Caco-2 (cell line): ENCODE measurements at regions of chr16 and their contacts with region 1.

Region 1: GRCh38 chr16:31333686-31334649 is 21.0 kb upstream of the ITGAX start:
- DNase-seq: peak; percentile 51 to 52
- H3K4me3 ChIP-seq: no peak overlapping the region
- H3K4me3 Mint-ChIP-seq: no peak overlapping the region
- H3K27ac Mint-ChIP-seq: no peak overlapping the region
- H3K4me1 ChIP-seq: no peaks in the 10 kb centered on the region
- H3K4me1 Mint-ChIP-seq: peaks cover 14% of the 10 kb centered on the region
- H3K27me3 ChIP-seq: no peaks in the 10 kb centered on the region
- H3K27me3 Mint-ChIP-seq: peaks cover 12% of the 10 kb centered on the region
- CTCF ChIP-seq: peak in 1 of 2 experiments; percentile 65

Region 2: GRCh38 chr16:31215287-31216162 is 118.4 kb before region 1 on chr16:
- CTCF ChIA-PET with region 1: interaction called, 5 read pairs
- POLR2A ChIA-PET with region 1: no interaction called
- intact Hi-C with region 1: loop called (anchors 5 kb)
- DNase-seq: peak; percentile 76 to 77
- H3K4me3 ChIP-seq: peak overlapping the region; percentile 43
- H3K4me3 Mint-ChIP-seq: peak overlapping the region; percentile 70
- H3K27ac Mint-ChIP-seq: no peak overlapping the region
- H3K4me1 ChIP-seq: no peaks in the 10 kb centered on the region
- H3K4me1 Mint-ChIP-seq: peaks cover 11% of the 10 kb centered on the region
- H3K27me3 ChIP-seq: no peaks in the 10 kb centered on the region
- H3K27me3 Mint-ChIP-seq: peaks cover 3% of the 10 kb centered on the region
- CTCF ChIP-seq: no peak

Region 3: GRCh38 chr16:31229501-31229900 is 104.5 kb before region 1 on chr16:
- CTCF ChIA-PET with region 1: no interaction called
- POLR2A ChIA-PET with region 1: no interaction called
- intact Hi-C with region 1: no loop called
- DNase-seq: no peak
- H3K4me3 ChIP-seq: no peak overlapping the region
- H3K4me3 Mint-ChIP-seq: no peak overlapping the region
- H3K27ac Mint-ChIP-seq: no peak overlapping the region
- H3K4me1 ChIP-seq: peaks cover 3% of the 10 kb centered on the region; the same call in 1 of the 2 replicates
- H3K4me1 Mint-ChIP-seq: peaks cover 6% of the 10 kb centered on the region
- H3K27me3 ChIP-seq: no peaks in the 10 kb centered on the region
- H3K27me3 Mint-ChIP-seq: no peaks in the 10 kb centered on the region
- CTCF ChIP-seq: no peak

Region 4: DNA sequence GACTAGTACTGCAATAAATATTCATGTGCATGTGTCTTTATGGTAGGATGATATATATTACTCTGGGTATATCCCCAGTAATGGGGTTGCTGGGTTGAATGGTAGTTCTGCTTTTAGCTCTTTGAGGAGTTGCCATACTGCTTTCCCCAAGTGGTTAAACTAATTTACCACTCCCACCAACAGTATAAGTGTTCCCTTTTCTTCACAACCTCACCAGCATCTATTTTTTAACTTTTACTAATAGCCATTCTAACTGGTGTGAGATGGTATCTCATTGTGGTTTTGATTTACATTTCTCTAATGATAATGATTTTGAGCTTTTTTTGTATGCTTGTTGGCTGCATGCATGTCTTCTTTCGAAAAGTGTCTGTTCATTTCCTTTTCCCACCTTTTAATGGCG is 41.3 kb before region 1 on chr16:
- CTCF ChIA-PET with region 1: no interaction called
- POLR2A ChIA-PET with region 1: no interaction called
- intact Hi-C with region 1: no loop called
- DNase-seq: no peak
- H3K4me3 ChIP-seq: no peak overlapping the region
- H3K4me3 Mint-ChIP-seq: no peak overlapping the region
- H3K27ac Mint-ChIP-seq: no peak overlapping the region
- H3K4me1 ChIP-seq: no peaks in the 10 kb centered on the region
- H3K4me1 Mint-ChIP-seq: no peaks in the 10 kb centered on the region
- H3K27me3 ChIP-seq: no peaks in the 10 kb centered on the region
- H3K27me3 Mint-ChIP-seq: peaks cover 3% of the 10 kb centered on the region
- CTCF ChIP-seq: no peak